Posterior cingulate gyrus (tissue), 11 donors: ENCODE measurements at regions of chr3 and their contacts with region 1.

Region 1: DNA sequence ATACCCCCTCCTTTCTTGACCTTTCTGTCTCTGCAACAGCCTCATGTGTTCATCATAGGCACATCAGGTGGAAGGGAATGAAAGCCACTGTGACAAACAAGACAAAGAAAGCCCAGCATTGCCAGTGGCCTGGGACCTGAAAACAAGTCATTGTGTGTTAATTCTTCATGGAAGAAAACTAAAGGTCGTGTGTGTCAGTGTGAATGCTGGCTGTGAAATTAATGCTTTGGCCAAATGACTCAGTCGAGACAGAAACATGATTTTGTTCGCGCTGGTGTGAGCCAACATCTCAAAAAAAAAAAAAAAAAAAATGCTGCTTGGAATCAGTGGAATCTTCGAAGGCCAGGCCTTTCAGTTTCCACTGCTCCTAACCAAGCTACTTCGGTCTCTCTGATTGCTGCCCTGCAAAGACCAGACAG is 386.5 kb upstream of the PROK2 start:
- DNase-seq: peak in 4 of 10 donors; percentile 30 to 54 (median 40)

Region 2: GRCh38 chr3:72152551-72153476 is 18.7 kb before region 1 on chr3:
- intact Hi-C with region 1: loop called (anchors 2 kb)
- DNase-seq: peak; percentile 27 to 94 (median 56)

Region 3: GRCh38 chr3:72193771-72194463 is 22.4 kb after region 1 on chr3:
- intact Hi-C with region 1: no loop called
- DNase-seq: peak in 1 of 10 donors; percentile 54

Region 4: DNA sequence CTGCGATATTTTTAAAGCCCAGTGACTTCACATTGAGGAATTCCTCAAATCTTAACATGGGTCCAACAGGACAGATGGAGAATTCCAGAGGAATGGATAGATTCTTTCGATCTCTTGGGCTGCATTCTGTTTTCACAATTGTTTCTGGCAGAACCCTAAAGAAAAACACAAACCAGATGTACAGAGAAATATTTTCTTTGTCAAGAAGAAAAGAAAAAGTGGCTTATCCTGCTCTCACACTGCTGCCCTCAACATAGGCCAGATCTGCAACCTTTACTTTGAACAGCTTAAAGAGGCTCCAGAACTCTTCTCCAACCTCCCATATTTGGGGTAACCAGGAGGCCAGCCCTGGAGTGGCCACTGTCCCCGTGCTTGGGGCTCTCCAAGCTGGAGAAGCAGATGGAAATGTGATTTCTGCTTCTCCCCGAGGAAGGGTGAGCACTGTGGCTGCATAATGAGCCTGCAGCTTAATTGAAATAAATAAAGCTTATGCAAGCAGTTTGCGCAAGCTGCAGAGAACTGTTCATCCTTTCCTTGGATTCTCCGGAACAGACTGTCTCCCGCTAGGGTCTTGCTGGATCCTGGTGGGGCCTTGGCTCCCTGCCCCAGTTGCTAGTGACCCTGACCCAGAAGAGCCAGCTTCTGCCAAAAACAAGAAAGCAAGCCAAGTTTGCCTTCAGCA is 66.7 kb after region 1 on chr3:
- intact Hi-C with region 1: loop called (anchors 5 kb)
- DNase-seq: peak in 1 of 10 donors; percentile 85

Region 5: DNA sequence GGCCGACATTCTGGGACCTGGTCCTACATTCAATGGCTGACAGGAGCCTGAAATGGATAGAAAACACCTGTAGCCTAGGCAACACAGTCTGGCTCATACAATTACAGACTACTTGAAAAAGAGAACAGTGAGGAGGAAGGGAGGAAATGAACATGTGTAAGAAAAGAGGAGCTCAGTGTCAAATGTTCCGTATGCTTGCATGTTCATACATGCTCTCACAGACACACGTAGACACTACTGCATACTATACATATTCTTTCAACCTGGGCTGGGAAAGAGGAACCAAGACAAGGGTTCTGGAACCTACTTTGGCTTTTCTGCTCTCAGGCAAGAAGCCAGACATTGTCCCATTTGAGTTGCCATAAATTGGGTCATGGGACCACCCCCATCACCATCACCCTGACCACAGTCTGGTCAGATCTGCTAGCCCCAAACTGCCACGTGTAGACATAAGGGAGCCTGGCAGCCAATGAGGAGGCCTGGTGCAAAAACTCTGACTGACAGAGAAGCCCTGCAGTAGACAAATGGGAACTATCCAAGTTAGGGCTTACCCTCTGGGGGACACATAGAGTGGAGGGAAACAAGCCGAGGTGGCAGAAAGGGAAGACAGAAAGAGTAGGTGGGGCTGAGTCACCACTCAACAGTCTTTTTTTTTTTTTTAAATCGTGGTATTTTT is 366.7 kb after region 1 on chr3:
- intact Hi-C with region 1: no loop called
- DNase-seq: no peak